Motor neuron (in vitro differentiated cells): ENCODE measurements at regions of chr1 and their contacts with region 1.

Region 1: DNA sequence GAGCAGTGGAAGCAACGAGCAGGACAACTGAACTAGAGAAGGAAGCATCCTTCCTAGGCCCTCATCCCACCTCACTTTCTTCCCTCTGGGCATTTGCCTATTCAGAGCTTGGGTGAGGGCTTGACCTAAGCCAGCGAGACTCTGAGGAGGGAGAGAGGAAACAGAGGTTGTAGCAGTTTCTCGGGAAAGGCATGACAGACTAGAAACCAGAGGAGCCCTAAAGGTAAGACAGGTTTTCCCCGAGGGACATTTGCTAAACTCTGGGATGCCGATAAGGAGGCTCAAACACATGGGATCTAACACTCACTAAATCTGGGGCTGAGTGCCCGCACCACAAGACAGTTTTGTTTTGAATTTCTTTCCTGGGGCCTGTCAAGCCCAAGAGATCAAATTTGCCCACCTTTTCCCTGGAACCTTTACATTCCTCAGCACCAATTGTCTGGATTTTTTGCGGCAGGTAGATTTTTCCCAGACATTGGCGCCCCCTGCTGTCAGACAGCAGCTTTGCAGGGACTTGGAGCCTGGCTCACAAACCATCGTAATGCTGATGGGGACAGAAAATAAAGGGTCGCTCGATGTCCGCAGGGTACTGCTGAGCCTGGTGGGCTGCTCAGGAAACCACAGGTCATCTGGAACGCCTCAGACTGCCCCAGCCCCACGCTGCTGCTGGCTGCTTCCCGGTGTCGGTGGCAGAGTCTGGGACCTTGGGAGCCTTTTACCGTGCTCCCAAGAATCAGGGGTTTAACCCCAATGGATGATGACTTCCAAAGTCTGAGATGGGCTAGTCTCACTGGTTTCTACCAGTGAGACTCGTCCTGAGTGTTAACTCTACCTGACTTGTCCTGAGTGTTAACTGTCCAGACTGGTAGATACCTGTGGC is 23.4 kb upstream of the TSPAN2 start:
- ATAC-seq: peak in 6 of 8 experiments; percentile 25 to 71 (median 49)
- H3K4me3 ChIP-seq: no peak overlapping the region
- H3K27ac ChIP-seq: no peak overlapping the region
- H3K4me1 ChIP-seq: no peaks in the 10 kb centered on the region

Region 2: DNA sequence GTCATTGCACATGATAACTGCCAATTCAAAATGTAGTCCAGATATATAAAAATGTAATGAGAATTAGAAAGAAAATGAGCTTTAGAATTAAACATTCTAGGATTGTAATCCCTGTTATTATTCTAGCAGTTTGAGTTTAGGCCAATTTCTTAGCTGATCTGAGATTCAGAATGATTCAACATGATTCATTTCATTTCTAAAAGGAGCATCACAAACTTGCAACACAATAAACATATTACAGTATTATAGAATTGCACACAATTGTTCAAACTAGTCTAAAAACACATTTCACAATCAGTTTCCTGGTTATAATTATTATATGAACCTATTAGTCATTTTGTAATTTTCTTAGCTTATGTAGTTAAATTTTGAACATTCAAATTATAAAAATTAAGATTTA is 126.5 kb before region 1 on chr1:
- in situ Hi-C with region 1: loop called in 6 of 9 experiments (anchors 10 to 25 kb)
- ATAC-seq: no peak
- H3K4me3 ChIP-seq: no peak overlapping the region
- H3K27ac ChIP-seq: no peak overlapping the region
- H3K4me1 ChIP-seq: no peaks in the 10 kb centered on the region